CD4-positive, alpha-beta memory T cell (primary cell): ENCODE measurements at regions of chr11 and their contacts with region 1.

Region 1: DNA sequence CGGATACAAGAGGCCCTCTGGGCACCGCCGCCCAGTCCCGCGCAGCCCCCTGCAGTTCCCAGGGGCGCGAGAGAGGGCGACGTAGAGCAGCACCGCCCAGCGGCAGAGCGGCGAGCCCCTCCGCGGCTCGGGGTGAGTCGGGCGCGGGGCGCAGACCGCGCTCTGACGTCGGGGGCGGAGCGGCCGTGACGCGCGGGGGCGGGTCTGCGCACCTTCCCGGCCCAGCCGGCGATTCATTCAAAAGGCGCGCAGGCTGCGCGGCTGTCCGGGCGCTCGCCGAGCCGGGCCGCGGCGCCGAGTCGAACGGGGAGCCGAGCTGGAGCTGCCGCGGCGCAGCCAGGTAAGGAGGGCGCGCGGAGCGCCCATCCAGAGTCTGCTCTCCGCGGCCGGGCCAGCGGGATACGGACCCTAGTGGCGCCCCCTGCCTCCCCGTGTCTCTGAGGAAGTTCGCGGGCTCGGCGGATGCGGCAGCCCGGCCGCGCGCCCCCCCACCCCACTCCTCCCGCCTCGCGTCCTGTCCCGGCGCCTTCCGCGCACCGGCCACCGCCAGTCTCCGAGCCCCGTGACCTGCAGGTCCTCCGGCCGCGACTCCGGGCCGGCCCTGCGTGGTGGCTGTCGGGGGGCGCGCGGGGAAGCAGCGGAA is at the start of gene RELT:
- DNase-seq: peak; percentile 87 to 97 (median 94)
- H3K4me3 ChIP-seq: peak within 1 kb of the TSS; percentile 49 to 86
- H3K4me3 Mint-ChIP-seq: peak within 1 kb of the TSS; percentile 87 to 98 (median 96)
- H3K27ac ChIP-seq: peak within 1 kb of the TSS; percentile 89
- H3K27ac Mint-ChIP-seq: peak within 1 kb of the TSS; percentile 89 to 100 (median 99)
- H3K4me1 ChIP-seq: peaks cover 51% of the 10 kb centered on the region
- H3K4me1 Mint-ChIP-seq: peaks cover 20 to 53% (median 37%) of the 10 kb centered on the region in 4 donors
- H3K27me3 ChIP-seq: no peaks in the 10 kb centered on the region
- H3K27me3 Mint-ChIP-seq: no peaks in the 10 kb centered on the region
- total RNA-seq, gene RELT: 12.1 to 12.9 TPM

Region 2: GRCh38 chr11:73360336-73361013 is 15.8 kb before region 1 on chr11:
- CTCF ChIA-PET with region 1: interaction called, 10 read pairs
- POLR2A ChIA-PET with region 1: interaction called, 31 read pairs
- intact Hi-C with region 1: loop called (anchors 2 kb)
- DNase-seq: no peak
- H3K4me3 ChIP-seq: no peak overlapping the region
- H3K4me3 Mint-ChIP-seq: no peak overlapping the region
- H3K27ac ChIP-seq: no peak overlapping the region
- H3K27ac Mint-ChIP-seq: peak overlapping the region in 2 of 7 donors; percentile 8 to 75
- H3K4me1 ChIP-seq: peaks cover 6% of the 10 kb centered on the region
- H3K4me1 Mint-ChIP-seq: peaks cover 0 to 13% (median 3%) of the 10 kb centered on the region in 4 donors
- H3K27me3 ChIP-seq: no peaks in the 10 kb centered on the region
- H3K27me3 Mint-ChIP-seq: no peaks in the 10 kb centered on the region

Region 3: GRCh38 chr11:73366265-73366610 is 10.0 kb before region 1 on chr11:
- CTCF ChIA-PET with region 1: interaction called, 10 read pairs
- POLR2A ChIA-PET with region 1: interaction called, 31 read pairs
- intact Hi-C with region 1: loop called (anchors 1 kb)
- DNase-seq: peak; percentile 43 to 77 (median 64)
- H3K4me3 ChIP-seq: peak overlapping the region in 1 of 2 donors; percentile 16
- H3K4me3 Mint-ChIP-seq: peak overlapping the region; percentile 21 to 83 (median 71)
- H3K27ac ChIP-seq: peak overlapping the region; percentile 67
- H3K27ac Mint-ChIP-seq: peak overlapping the region; percentile 81 to 97 (median 96)
- H3K4me1 ChIP-seq: peaks cover 35% of the 10 kb centered on the region
- H3K4me1 Mint-ChIP-seq: peaks cover 12 to 42% (median 24%) of the 10 kb centered on the region in 4 donors
- H3K27me3 ChIP-seq: no peaks in the 10 kb centered on the region
- H3K27me3 Mint-ChIP-seq: no peaks in the 10 kb centered on the region

Region 4: DNA sequence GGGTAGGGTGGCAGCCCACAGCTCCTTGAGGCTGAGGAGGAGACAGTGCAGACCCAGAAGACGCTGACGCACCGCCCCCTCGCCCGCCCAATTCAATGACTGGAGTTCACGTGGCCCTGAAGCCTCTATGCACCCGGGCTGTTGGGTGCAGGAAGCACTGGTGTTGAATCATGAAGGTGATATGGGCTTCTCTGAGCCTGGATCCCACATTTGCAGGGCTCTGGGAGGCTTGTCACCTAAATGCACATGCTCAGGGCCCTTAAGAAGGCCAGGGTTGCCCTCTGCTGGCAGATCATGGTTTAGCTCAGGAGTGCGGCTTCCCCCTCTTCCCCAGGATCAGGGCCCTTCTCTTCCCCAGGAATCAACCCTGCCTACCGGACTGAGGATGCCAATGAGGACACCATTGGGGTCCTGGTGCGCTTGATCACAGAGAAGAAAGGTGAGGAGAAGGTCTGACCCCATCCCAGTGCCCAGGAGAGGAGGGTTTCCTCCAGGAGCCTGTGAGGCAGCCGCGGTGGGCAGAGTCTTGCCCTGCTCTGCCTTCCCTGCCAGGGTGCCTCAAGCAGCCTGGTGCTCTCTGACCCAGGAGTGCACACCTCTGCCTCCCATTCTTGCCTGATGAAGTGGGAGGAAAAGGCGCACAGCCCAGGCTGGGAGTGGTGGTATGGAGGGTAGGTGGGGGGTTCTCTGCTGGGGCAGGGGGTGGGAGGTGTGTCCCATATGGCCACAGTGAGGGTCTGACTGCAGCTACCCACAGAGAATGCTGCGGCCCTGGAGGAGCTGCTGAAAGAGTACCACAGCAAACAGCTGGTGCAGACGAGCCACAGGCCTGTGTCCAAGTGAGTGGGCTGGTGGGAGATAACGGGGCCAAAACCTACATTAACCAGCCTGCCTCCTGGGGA is 17.4 kb after region 1 on chr11:
- CTCF ChIA-PET with region 1: interaction called, 4 read pairs
- POLR2A ChIA-PET with region 1: interaction called, 7 read pairs
- intact Hi-C with region 1: loop called (anchors 1 kb)
- DNase-seq: peak; percentile 61 to 69 (median 64)
- H3K4me3 ChIP-seq: no peak overlapping the region
- H3K4me3 Mint-ChIP-seq: no peak overlapping the region
- H3K27ac ChIP-seq: no peak overlapping the region
- H3K27ac Mint-ChIP-seq: peak overlapping the region in 6 of 7 donors; percentile 48 to 84 (median 68)
- H3K4me1 ChIP-seq: no peaks in the 10 kb centered on the region
- H3K4me1 Mint-ChIP-seq: peaks cover 0 to 11% (median 7%) of the 10 kb centered on the region in 4 donors
- H3K27me3 ChIP-seq: no peaks in the 10 kb centered on the region
- H3K27me3 Mint-ChIP-seq: no peaks in the 10 kb centered on the region

Region 5: DNA sequence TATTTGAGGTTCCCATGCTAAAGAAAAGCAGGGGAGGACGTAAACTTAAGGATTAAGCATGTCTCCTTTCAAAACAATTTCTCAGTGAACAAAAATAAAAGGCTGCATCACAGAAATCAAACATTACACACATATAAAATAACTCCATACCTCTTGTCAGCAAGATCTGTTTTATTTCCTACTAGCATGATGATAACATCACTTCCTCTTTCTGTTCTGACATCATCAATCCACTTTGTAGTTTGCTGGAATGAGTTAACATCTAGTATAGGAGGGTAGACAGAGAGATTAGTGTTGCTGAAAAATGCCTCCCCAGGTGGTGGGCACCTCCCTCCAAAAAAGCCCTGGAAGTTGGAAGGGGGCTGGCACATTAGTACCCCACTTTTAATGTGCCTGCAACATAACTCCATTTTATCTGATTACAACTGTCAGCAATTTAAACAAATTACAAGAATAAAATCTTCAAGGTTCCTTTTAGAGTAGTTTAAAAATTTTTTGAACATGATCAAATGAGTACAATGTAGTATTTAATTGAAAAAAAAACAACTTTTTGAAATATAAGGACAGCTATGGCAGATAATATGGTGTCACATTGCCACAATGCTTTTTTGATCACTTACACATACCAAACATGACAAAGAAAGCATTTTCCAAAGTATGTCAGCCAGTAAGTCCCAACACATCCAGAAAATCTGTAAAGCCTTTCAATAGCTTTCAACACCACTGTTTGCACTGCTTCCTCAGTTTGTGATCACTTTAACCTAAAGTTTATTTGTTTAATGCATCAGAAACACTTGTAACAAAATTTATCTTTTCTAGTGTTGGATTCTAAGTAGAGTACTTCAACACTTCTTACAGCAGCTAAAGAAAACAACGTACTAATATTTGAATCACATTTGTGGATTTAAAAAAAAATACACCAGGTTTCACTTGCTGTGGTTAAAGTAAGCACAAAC is 340.1 kb after region 1 on chr11:
- CTCF ChIA-PET with region 1: no interaction called
- POLR2A ChIA-PET with region 1: no interaction called
- intact Hi-C with region 1: no loop called
- DNase-seq: peak in 2 of 5 donors; percentile 1 to 11
- H3K4me3 ChIP-seq: no peak overlapping the region
- H3K4me3 Mint-ChIP-seq: no peak overlapping the region
- H3K27ac ChIP-seq: no peak overlapping the region
- H3K27ac Mint-ChIP-seq: peak overlapping the region in 6 of 7 donors; percentile 36 to 80 (median 60)
- H3K4me1 ChIP-seq: no peaks in the 10 kb centered on the region
- H3K4me1 Mint-ChIP-seq: peaks cover 5 to 12% (median 6%) of the 10 kb centered on the region in 4 donors
- H3K27me3 ChIP-seq: no peaks in the 10 kb centered on the region
- H3K27me3 Mint-ChIP-seq: no peaks in the 10 kb centered on the region